GM23248 (cell line): ENCODE measurements at regions of chr5 and their contacts with region 1.

Region 1: GRCh38 chr5:72378636-72379290 is 58.6 kb downstream of the PTCD2 start:
- DNase-seq: peak; percentile 93
- H3K4me3 ChIP-seq: no peak overlapping the region
- H3K27ac ChIP-seq: no peak overlapping the region
- H3K4me1 ChIP-seq: peaks cover 57% of the 10 kb centered on the region
- H3K27me3 ChIP-seq: no peaks in the 10 kb centered on the region

Region 2: GRCh38 chr5:72093217-72093616 is 285.5 kb before region 1 on chr5:
- in situ Hi-C with region 1: no loop called
- DNase-seq: peak; percentile 80
- H3K4me3 ChIP-seq: no peak overlapping the region
- H3K27ac ChIP-seq: no peak overlapping the region
- H3K4me1 ChIP-seq: 0 out of 2 replicates have a peak, but pooled peaks cover 5% of the 10 kb centered on the region
- H3K27me3 ChIP-seq: no peaks in the 10 kb centered on the region

Region 3: DNA sequence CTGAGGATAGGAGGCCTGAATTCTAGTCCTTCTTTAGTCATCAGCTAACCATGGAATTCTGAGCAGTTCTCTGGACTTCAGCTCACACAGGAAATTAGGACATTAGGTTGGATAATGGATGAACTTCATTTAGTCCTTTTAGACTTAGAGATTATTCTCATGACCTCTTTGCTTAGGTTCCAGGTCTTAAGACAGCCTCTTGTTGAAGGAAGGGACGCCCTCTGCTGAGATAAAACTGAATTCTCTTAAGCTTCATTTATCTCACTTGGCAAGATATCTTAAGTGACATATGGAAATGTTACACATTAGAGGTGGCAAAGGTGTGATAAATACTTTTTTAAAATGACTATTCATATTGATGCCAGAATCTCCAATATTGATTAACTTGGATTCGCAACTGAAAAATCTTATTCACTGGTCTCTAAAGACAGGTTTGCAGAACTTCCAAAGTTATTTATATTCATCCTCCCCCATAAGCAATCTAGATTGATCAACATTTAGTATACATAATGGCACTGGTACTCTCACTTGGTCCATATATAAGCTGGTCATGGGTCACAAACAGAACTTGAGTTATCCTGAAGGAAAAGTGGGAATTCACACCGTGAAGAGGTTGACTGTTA is 145.3 kb after region 1 on chr5:
- in situ Hi-C with region 1: loop called (anchors 10 kb)
- DNase-seq: peak; percentile 86
- H3K4me3 ChIP-seq: no peak overlapping the region
- H3K27ac ChIP-seq: peak overlapping the region; percentile 14; the same call in 1 of the 2 replicates
- H3K4me1 ChIP-seq: peaks cover 24% of the 10 kb centered on the region
- H3K27me3 ChIP-seq: no peaks in the 10 kb centered on the region

Region 4: DNA sequence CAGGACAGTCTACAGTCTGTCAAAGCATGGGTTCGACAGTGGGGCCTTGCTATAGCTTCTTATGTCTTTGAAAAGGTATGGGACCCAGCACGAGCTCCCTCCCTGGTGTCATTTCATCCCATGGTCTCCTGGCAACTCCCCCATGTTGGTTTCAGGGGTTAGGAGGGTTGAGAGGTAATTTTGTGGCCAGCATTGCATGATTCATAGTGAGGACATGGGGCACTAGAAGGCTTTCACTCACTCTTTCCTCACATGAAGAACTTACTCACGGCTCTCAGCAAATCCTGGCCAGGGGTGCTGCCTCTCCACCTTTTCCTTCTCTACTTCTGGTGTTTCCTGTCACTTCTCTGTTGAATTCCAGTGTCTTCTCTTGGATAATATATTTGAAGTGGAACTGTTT is 303.0 kb after region 1 on chr5:
- in situ Hi-C with region 1: no loop called
- DNase-seq: no peak
- H3K4me3 ChIP-seq: no peak overlapping the region
- H3K27ac ChIP-seq: no peak overlapping the region
- H3K4me1 ChIP-seq: no peaks in the 10 kb centered on the region
- H3K27me3 ChIP-seq: 0 out of 2 replicates have a peak, but pooled peaks cover 5% of the 10 kb centered on the region